PC-9 (cell line): ENCODE measurements at regions of chr6 and their contacts with region 1.

Region 1: GRCh38 chr6:158060455-158061360 is 79.0 kb downstream of the SYNJ2 start:
- DNase-seq: peak; percentile 89 to 95
- H3K4me3 ChIP-seq: peak overlapping the region; percentile 37; the same call in 1 of the 2 replicates
- H3K27ac ChIP-seq: peak overlapping the region; percentile 95
- H3K4me1 ChIP-seq: peaks cover 71% of the 10 kb centered on the region
- H3K27me3 ChIP-seq: no peaks in the 10 kb centered on the region
- CTCF ChIP-seq: no peak

Region 2: DNA sequence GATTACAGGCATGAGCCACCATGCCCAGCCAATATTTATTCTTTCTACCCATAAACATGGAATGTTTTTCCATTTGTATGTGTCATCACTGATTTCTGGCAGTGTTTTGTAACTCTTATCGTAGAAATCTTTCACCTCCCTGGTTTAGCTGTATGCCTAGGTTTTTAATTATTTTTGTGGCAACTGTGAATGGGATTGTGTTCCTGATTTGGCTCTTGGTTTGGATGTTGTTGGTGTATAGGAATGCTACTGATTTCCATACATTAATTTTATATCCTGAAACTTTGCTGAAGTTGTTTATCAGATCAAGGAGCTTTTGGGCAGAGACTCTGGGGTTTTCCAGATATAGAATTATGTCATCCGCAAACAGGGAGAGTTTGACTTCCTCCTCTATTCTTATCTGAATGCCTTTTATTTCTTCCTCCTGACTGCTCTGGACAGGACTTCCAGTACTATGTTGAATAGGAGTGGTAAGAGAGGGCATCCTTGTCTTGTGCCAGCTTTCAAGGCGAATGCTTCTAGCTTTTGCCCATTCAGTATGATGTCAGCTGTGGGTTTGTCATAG is 481.2 kb before region 1 on chr6:
- CTCF ChIA-PET with region 1: no interaction called
- POLR2A ChIA-PET with region 1: no interaction called
- intact Hi-C with region 1: no loop called
- DNase-seq: peak; percentile 5 to 78
- H3K4me3 ChIP-seq: peak overlapping the region; percentile 21; the same call in 1 of the 2 replicates
- H3K27ac ChIP-seq: peak overlapping the region; percentile 64
- H3K4me1 ChIP-seq: peaks cover 27% of the 10 kb centered on the region
- H3K27me3 ChIP-seq: no peaks in the 10 kb centered on the region
- CTCF ChIP-seq: no peak

Region 3: DNA sequence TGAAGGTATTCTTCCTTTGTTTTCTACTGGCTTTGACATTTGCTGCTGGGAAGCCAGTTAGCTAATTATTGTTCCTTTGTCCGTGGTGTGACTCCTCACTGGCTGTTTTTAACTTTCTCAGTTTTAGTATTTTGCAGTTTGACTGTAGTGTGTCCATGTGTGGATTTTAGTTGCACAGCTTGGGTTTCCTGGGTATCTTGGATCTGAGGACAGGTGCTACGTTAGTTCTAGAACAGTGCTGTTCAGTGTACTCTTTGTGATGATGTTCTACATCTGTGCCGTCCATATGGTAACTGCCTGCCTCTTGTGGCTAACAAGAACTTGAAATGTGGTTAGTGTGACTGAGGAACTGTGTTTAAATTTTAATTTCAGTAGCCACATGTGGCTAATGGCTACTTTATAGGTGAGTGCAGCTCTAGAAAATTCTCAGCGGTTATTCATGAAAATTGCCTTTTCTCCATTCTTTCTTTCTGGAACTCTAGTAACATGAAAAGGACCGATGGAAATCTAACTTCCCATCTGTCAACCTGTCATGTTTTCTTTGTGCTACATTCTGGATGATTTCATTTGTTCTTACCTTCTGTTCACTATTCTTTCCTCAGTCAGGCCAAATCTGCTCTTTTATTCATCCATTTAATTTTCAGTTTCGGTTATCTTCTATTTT is 230.2 kb before region 1 on chr6:
- CTCF ChIA-PET with region 1: no interaction called
- POLR2A ChIA-PET with region 1: no interaction called
- intact Hi-C with region 1: loop called (anchors 2 kb)
- DNase-seq: no peak
- H3K4me3 ChIP-seq: no peak overlapping the region
- H3K27ac ChIP-seq: 0 out of 2 replicates have a peak overlapping the region, but pooled peaks have one; percentile 88
- H3K4me1 ChIP-seq: peaks cover 52% of the 10 kb centered on the region
- H3K27me3 ChIP-seq: no peaks in the 10 kb centered on the region
- CTCF ChIP-seq: no peak

Region 4: GRCh38 chr6:157981395-157982296 is 79.1 kb before region 1 on chr6 and contains the start of gene SYNJ2:
- CTCF ChIA-PET with region 1: no interaction called
- POLR2A ChIA-PET with region 1: no interaction called
- intact Hi-C with region 1: loop called (anchors 2 kb)
- DNase-seq: peak; percentile 46 to 79
- H3K4me3 ChIP-seq: peak within 1 kb of the TSS; percentile 86
- H3K27ac ChIP-seq: 0 out of 2 replicates have a peak within 1 kb of the TSS, but pooled peaks have one; percentile 21
- H3K4me1 ChIP-seq: peaks cover 46% of the 10 kb centered on the region
- H3K27me3 ChIP-seq: no peaks in the 10 kb centered on the region
- CTCF ChIP-seq: peak; percentile 48; the same call in 1 of the 2 replicates
- total RNA-seq, gene SYNJ2: 30.3 and 39.4 TPM in 2 replicates

Region 5: DNA sequence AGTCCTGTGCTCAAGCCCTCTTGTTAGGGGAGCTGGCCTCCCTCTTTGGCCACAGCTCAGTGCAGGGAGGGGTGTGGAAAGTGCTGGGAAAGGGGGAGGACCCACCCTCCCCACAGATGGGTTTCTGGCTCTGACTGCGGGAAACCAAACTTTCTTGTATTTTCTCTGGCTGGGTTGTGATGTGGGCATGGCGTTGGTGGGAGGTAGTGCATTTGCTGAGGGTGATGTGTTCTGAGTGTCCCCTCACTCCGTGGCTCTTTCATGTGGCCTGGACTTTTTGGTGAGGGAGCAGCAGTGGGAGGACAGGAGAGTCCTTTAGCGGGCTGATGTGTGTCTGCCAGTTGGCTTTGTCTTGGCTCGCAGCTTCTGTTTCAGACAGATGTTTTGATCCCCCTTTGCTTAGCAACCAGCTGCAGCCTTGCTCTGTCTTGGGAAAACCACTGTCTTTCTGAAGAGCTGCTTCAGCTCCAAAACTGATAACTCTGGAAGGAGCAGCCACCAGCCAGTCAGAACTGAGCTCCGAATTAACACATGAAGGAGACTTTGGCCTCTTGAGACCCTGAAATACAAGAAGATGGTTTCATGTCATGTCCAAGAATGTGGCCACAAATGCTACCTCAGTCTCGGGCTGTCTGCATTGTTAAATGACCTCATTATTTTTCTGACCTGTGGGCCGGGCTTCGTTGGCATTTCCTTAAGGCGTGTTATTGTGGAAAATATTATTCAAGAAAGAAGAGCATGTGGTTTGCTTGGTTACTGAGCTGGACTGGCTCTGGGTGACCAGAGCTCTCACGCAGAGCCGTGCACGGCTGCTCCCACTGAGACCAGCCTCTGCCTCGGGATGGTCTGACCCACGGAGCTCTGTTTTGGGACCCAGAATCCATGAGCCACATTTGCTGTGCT is 57.5 kb before region 1 on chr6:
- CTCF ChIA-PET with region 1: interaction called, 3 read pairs
- POLR2A ChIA-PET with region 1: interaction called, 5 read pairs
- intact Hi-C with region 1: loop called (anchors 2 kb)
- DNase-seq: peak; percentile 46 to 59
- H3K4me3 ChIP-seq: no peak overlapping the region
- H3K27ac ChIP-seq: peak overlapping the region; percentile 68
- H3K4me1 ChIP-seq: peaks cover 41% of the 10 kb centered on the region
- H3K27me3 ChIP-seq: no peaks in the 10 kb centered on the region
- CTCF ChIP-seq: no peak

Region 6: GRCh38 chr6:158011980-158012566 is 48.6 kb before region 1 on chr6:
- CTCF ChIA-PET with region 1: no interaction called
- POLR2A ChIA-PET with region 1: interaction called, 5 read pairs
- intact Hi-C with region 1: loop called (anchors 1 kb)
- DNase-seq: no peak
- H3K4me3 ChIP-seq: no peak overlapping the region
- H3K27ac ChIP-seq: no peak overlapping the region
- H3K4me1 ChIP-seq: peaks cover 37% of the 10 kb centered on the region
- H3K27me3 ChIP-seq: no peaks in the 10 kb centered on the region
- CTCF ChIP-seq: no peak

Region 7: GRCh38 chr6:158040051-158040803 is 20.5 kb before region 1 on chr6:
- CTCF ChIA-PET with region 1: no interaction called
- POLR2A ChIA-PET with region 1: no interaction called
- intact Hi-C with region 1: loop called (anchors 1 kb)
- DNase-seq: peak; percentile 60 to 97
- H3K4me3 ChIP-seq: peak overlapping the region; percentile 43; the same call in 1 of the 2 replicates
- H3K27ac ChIP-seq: peak overlapping the region; percentile 90
- H3K4me1 ChIP-seq: peaks cover 59% of the 10 kb centered on the region
- H3K27me3 ChIP-seq: no peaks in the 10 kb centered on the region
- CTCF ChIP-seq: no peak